ENCODE measurements at regions of chr17 and their contacts with region 1.

Region 1: DNA sequence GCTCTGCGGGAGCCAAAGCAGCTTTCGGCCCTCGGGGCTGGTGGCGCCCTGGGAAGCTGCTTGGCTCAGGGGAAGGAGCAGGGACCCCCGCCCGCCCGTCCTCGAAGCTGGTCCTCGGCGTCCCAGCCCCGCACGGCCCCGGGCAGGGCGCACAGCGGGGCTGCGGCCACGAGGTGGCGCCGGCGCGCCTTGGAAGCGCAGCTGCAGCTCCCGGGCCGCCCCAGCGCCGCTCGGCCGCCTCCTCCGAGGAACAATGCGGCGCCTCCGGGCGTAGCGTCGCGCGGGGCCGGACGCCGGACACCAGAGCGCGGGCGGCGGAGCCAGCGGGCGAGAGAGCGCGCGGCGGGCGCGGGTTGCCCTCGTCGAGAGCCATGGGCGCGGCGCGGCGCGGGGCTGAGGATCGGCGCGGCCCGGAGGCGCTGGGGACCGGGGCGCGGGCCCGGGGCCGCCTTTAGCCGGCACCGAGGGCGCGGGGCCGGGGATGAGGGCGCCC is at the start of gene MGAT5B:
- DNase-seq: peak; percentile 91
- ATAC-seq: peak; percentile 78
- H3K4me3 Mint-ChIP-seq: peak within 1 kb of the TSS; percentile 78
- H3K27ac Mint-ChIP-seq: no peak within 1 kb of the TSS
- H3K4me1 Mint-ChIP-seq: peaks cover 12% of the 10 kb centered on the region
- H3K27me3 Mint-ChIP-seq: peaks cover 29% of the 10 kb centered on the region
- CTCF ChIP-seq: peak; percentile 75
- total RNA-seq, gene MGAT5B: 11.5 to 12.0 TPM (median 11.6 TPM) in 3 replicates

Region 2: DNA sequence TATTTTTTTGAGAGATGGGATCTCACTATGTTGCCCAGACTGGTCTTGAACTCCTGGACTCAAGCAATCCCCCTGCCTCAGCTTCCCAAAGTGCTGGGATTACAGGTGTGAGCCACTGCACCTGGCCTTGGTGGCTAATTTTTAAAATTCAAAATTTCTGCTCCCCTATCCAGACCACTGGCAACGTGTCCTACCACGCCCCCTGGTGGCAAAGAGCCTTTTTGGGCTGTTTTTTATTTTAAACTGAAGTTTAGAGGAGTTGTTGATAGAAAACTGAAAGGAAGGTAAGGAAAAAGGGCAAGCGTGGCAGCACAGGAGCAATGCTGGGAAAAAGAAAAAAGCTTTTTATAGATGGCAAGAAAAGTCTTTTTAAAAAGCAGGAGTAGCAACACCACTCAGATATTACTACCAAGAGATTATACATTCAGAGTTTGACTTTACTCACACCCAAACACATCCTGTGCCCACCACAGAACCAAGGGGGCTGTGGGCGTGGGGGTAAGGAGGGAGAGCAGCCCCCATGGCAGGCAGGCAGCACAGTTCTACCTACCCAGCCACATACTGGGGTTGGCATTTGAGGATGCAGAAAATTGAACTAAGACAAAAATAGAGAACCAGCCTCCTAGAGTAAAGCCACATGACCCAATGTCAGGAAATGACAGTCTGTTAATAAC is 153.3 kb before region 1 on chr17:
- CTCF ChIA-PET with region 1: no interaction called
- POLR2A ChIA-PET with region 1: no interaction called
- DNase-seq: peak; percentile 73
- ATAC-seq: no peak
- H3K4me3 Mint-ChIP-seq: no peak overlapping the region
- H3K27ac Mint-ChIP-seq: peak overlapping the region; percentile 40; the same call in 1 of the 2 replicates
- H3K4me1 Mint-ChIP-seq: peaks cover 9% of the 10 kb centered on the region
- H3K27me3 Mint-ChIP-seq: peaks cover 2% of the 10 kb centered on the region
- CTCF ChIP-seq: peak; percentile 68; the same call in 1 of the 2 replicates

Region 3: GRCh38 chr17:76816590-76817135 is 51.6 kb before region 1 on chr17:
- CTCF ChIA-PET with region 1: interaction called, 16 read pairs
- POLR2A ChIA-PET with region 1: no interaction called
- DNase-seq: peak; percentile 75
- ATAC-seq: peak; percentile 93
- H3K4me3 Mint-ChIP-seq: no peak overlapping the region
- H3K27ac Mint-ChIP-seq: no peak overlapping the region
- H3K4me1 Mint-ChIP-seq: peaks cover 16% of the 10 kb centered on the region
- H3K27me3 Mint-ChIP-seq: no peaks in the 10 kb centered on the region
- CTCF ChIP-seq: peak; percentile 32; the same call in 1 of the 2 replicates

Region 4: GRCh38 chr17:76879691-76880090 is 11.5 kb after region 1 on chr17:
- CTCF ChIA-PET with region 1: interaction called, 43 read pairs
- POLR2A ChIA-PET with region 1: no interaction called
- DNase-seq: no peak
- ATAC-seq: no peak
- H3K4me3 Mint-ChIP-seq: no peak overlapping the region
- H3K27ac Mint-ChIP-seq: peak overlapping the region; percentile 51
- H3K4me1 Mint-ChIP-seq: peaks cover 19% of the 10 kb centered on the region
- H3K27me3 Mint-ChIP-seq: no peaks in the 10 kb centered on the region
- CTCF ChIP-seq: no peak

Region 5: GRCh38 chr17:76909971-76910760 is 41.9 kb after region 1 on chr17:
- CTCF ChIA-PET with region 1: interaction called, 10 read pairs
- POLR2A ChIA-PET with region 1: no interaction called
- DNase-seq: peak; percentile 92
- ATAC-seq: peak; percentile 83
- H3K4me3 Mint-ChIP-seq: no peak overlapping the region
- H3K27ac Mint-ChIP-seq: 0 out of 2 replicates have a peak overlapping the region, but pooled peaks have one; percentile 7
- H3K4me1 Mint-ChIP-seq: peaks cover 17% of the 10 kb centered on the region
- H3K27me3 Mint-ChIP-seq: no peaks in the 10 kb centered on the region
- CTCF ChIP-seq: no peak

Region 6: GRCh38 chr17:76953946-76954345 is 85.7 kb after region 1 on chr17:
- CTCF ChIA-PET with region 1: interaction called, 17 read pairs
- POLR2A ChIA-PET with region 1: no interaction called
- DNase-seq: no peak
- ATAC-seq: no peak
- H3K4me3 Mint-ChIP-seq: no peak overlapping the region
- H3K27ac Mint-ChIP-seq: no peak overlapping the region
- H3K4me1 Mint-ChIP-seq: peaks cover 21% of the 10 kb centered on the region
- H3K27me3 Mint-ChIP-seq: no peaks in the 10 kb centered on the region
- CTCF ChIP-seq: no peak

Region 7: GRCh38 chr17:77011173-77012011 is 143.2 kb after region 1 on chr17:
- CTCF ChIA-PET with region 1: interaction called, 17 read pairs
- POLR2A ChIA-PET with region 1: no interaction called
- DNase-seq: peak; percentile 74
- ATAC-seq: no peak; the same call in 1 of the 2 replicates
- H3K4me3 Mint-ChIP-seq: no peak overlapping the region
- H3K27ac Mint-ChIP-seq: no peak overlapping the region
- H3K4me1 Mint-ChIP-seq: peaks cover 3% of the 10 kb centered on the region
- H3K27me3 Mint-ChIP-seq: no peaks in the 10 kb centered on the region; the same call in 1 of the 2 replicates
- CTCF ChIP-seq: peak; percentile 48

Region 8: DNA sequence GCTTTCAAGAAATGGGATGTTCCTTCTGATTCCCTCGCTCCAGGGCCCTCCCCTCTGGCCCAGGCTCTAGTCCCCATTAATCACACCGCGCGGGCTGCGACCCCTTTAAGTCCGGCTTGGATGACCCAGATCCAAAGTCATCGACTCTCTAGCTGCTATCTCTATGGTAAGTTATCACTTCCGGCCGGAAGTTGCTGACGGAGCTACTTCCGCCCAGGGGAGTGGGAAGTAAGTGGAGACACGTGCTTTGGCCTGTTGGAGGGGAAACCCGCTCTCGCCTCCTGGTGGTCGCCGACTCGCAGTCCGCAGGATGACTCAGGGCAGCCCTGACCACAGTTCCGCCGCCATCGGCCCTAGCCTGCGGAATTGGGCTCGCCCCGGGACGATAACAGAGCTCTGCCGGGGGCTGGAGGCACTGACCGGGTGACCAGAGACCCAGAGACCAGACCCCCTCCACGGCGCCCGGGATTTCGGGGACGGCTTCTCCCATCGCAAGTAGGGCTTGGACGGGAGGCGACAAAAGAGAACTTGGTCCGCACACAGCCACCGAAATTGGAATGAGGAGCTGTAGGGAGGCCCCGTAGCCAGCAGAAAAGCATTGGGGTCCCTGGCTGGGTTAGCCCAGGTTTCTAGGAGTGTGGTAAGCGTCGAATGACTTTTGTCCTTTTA is 220.4 kb after region 1 on chr17:
- CTCF ChIA-PET with region 1: interaction called, 13 read pairs
- POLR2A ChIA-PET with region 1: no interaction called
- DNase-seq: peak; percentile 92
- ATAC-seq: peak; percentile 88
- H3K4me3 Mint-ChIP-seq: peak overlapping the region; percentile 92
- H3K27ac Mint-ChIP-seq: peak overlapping the region; percentile 95
- H3K4me1 Mint-ChIP-seq: peaks cover 26% of the 10 kb centered on the region
- H3K27me3 Mint-ChIP-seq: no peaks in the 10 kb centered on the region
- CTCF ChIP-seq: no peak